ENCODE measurements at regions of chr12 and their contacts with region 1.

Region 1: GRCh38 chr12:48795480-48796455 is 6.9 kb upstream of the ADCY6 start:
- DNase-seq: peak; percentile 84
- H3K4me3 ChIP-seq: no peak overlapping the region
- H3K4me1 ChIP-seq: peaks cover 11% of the 10 kb centered on the region
- H3K27me3 ChIP-seq: no peaks in the 10 kb centered on the region

Region 2: GRCh38 chr12:48542300-48542928 is 253.4 kb before region 1 on chr12:
- in situ Hi-C with region 1: loop called (anchors 10 kb)
- DNase-seq: peak; percentile 53 to 79
- H3K4me3 ChIP-seq: no peak overlapping the region
- H3K4me1 ChIP-seq: peaks cover 10% of the 10 kb centered on the region
- H3K27me3 ChIP-seq: no peaks in the 10 kb centered on the region

Region 3: DNA sequence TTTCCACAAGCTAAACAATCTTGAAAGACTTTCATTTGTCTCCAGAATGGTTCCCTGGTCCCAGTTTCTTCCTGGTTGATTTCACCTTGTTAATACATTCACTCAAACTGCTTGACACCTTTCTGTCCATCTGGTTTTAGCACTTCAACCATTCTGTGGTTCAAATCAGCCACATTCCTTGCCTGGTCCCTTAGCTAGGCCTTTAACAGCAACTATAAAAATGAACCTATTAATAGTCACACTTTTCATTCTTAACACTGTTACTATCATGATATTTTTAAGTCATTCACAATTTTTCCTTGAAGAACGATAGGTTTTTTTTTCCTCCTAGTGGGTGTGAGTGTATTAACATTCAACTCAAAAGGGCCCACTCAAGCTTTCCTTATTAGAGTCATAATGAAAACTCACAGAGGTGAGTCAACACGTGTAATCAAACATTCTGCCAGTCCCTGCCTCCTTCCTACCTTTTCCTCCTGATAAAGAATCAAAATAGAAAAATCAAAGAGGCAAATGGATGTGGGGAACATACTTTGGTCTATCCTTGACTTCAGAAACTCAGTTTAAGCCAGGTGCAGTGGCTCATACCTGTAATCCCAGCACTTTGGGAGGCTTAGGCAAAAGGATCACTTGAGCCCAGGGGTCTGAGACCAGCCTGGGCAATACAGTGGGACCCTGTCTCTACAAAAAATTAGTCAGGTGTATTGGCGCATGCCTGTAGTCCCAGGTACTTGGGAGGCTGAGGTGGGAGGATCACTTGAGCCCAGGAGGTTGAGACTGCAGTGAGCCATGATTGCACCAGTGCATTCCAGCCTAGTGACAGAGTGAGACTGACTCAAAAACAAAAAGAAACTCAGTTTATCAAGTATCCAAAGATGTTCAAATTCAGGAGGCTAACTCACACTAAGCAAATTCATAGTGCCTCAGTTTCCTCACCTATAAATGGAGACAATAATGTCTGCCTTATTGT is 44.7 kb before region 1 on chr12:
- in situ Hi-C with region 1: loop called (anchors 5 kb)
- DNase-seq: no peak
- H3K4me3 ChIP-seq: no peak overlapping the region
- H3K4me1 ChIP-seq: peaks cover 3% of the 10 kb centered on the region; the same call in 1 of the 2 replicates
- H3K27me3 ChIP-seq: no peaks in the 10 kb centered on the region

Measured in HAP-1 (cell line).